ENCODE measurements at regions of chr12 and their contacts with region 1.

Region 1: GRCh38 chr12:117836999-117837736 is 131.6 kb downstream of the KSR2 start:
- DNase-seq: peak; percentile 89
- ATAC-seq: peak; percentile 83
- H3K4me3 Mint-ChIP-seq: no peak overlapping the region
- H3K27ac Mint-ChIP-seq: no peak overlapping the region
- H3K4me1 Mint-ChIP-seq: peaks cover 6% of the 10 kb centered on the region
- H3K27me3 Mint-ChIP-seq: peaks cover 19% of the 10 kb centered on the region

Region 2: DNA sequence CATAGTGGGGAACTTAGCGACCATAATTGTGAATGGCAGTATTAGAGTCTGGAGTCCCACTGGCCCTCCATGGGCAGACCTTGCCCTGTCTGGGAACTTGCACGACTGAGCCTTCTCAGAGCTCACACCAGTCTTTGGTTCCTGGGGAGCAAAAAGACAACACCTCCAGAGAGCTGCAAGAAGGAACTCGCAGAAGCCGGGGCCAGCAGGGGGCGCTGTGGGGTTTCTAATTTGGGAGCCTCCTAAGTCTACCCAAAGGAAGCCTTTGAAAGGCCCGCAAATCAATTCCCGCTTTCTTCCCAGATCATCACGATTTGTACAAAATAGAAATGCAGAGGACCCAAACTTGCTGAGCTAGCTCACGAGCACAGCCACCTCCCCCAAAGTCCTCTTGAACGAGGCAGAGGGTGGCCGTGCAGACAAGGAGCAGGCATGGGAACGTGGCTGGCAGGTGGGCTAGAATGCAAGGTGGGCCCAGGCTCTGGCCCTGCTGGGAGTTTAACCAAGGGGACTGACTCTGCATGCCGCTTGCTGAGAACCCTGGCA is 600.6 kb before region 1 on chr12:
- CTCF ChIA-PET with region 1: interaction called, 31 read pairs
- POLR2A ChIA-PET with region 1: no interaction called
- intact Hi-C with region 1: loop called (anchors 1 kb)
- DNase-seq: peak; percentile 93
- ATAC-seq: peak; percentile 66
- H3K4me3 Mint-ChIP-seq: no peak overlapping the region
- H3K27ac Mint-ChIP-seq: no peak overlapping the region
- H3K4me1 Mint-ChIP-seq: no peaks in the 10 kb centered on the region
- H3K27me3 Mint-ChIP-seq: peaks cover 14% of the 10 kb centered on the region

Region 3: GRCh38 chr12:117587631-117588287 is 249.4 kb before region 1 on chr12:
- CTCF ChIA-PET with region 1: interaction called, 14 read pairs
- POLR2A ChIA-PET with region 1: no interaction called
- intact Hi-C with region 1: loop called in 1 of 2 experiments (anchors 5 kb)
- DNase-seq: peak; percentile 70
- ATAC-seq: no peak
- H3K4me3 Mint-ChIP-seq: no peak overlapping the region
- H3K27ac Mint-ChIP-seq: no peak overlapping the region
- H3K4me1 Mint-ChIP-seq: no peaks in the 10 kb centered on the region
- H3K27me3 Mint-ChIP-seq: peaks cover 2% of the 10 kb centered on the region

Region 4: DNA sequence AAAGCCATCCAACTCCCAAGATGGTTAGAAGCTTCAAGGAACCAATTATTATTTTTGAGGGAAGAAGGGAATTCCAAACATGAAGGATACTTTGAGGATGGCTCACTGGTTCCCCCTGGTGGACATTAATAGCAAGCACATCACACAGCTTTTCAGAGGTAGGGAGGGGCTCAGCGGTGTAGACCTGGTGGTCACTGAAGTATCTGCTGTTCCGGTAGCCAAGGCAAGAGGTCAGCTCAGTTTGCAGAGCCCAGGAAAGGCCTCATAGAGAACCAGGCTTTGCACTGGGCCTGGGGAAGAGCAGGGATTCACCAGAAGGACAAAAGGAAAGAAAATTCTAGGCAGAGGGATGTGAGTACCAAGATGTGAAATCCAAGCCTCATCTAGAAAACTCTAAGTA is 12.9 kb after region 1 on chr12:
- CTCF ChIA-PET with region 1: interaction called, 30 read pairs
- POLR2A ChIA-PET with region 1: no interaction called
- intact Hi-C with region 1: no loop called
- DNase-seq: peak; percentile 17
- ATAC-seq: peak; percentile 65
- H3K4me3 Mint-ChIP-seq: no peak overlapping the region
- H3K27ac Mint-ChIP-seq: no peak overlapping the region
- H3K4me1 Mint-ChIP-seq: no peaks in the 10 kb centered on the region
- H3K27me3 Mint-ChIP-seq: peaks cover 21% of the 10 kb centered on the region